ENCODE measurements at regions of chr6 and their contacts with region 1.

Region 1: DNA sequence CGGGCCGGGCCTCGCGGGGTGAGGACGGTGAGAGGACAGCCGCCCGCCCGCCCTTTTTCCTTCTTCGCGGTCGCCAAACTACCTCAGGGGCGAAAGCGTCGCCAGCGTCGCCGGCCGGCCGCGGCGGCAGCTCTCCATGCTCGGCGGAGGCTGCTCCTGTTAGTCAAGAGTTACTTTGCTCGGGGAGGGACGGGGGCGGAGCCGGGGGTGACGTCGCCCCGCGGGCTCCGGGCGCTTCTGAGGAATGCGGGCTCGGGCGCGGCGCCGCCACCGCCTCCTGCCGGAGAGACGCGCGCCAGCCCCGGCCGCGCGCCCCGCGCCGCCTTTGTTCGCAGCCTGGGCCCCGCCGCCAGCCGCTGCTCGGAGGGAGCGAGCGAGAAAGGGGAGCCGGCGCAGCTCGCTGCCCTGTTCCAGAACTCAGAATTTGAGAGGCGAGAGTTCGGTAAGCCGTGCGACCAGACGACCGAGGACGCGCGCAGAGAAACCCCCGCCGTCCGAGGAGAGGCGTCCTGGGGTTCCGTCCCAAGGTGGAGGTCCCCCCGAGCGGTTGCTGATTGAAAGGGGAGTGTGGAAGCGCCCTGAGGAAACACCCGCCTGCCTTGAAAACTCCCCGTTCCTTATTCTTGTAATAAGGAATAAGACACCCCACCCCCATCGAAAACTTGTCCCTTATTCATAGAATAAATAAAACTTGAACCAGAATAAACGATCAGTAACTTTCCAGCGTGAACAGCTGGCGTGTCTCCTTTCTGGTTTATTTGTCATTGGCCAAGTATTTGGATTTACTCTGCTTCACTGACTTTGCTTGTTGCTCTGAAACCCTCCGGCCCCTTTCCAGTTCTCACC is at the start of gene PTPRK:
- DNase-seq: peak; percentile 93 to 95
- H3K4me3 ChIP-seq: peak within 1 kb of the TSS; percentile 84
- H3K4me3 Mint-ChIP-seq: peak within 1 kb of the TSS; percentile 92
- H3K27ac Mint-ChIP-seq: peak within 1 kb of the TSS; percentile 99
- H3K4me1 ChIP-seq: peaks cover 9% of the 10 kb centered on the region
- H3K4me1 Mint-ChIP-seq: peaks cover 20% of the 10 kb centered on the region
- H3K27me3 ChIP-seq: no peaks in the 10 kb centered on the region
- H3K27me3 Mint-ChIP-seq: no peaks in the 10 kb centered on the region
- CTCF ChIP-seq: peak; percentile 12 to 46
- total RNA-seq, gene PTPRK: 94.4 and 97.3 TPM in 2 replicates

Region 2: GRCh38 chr6:127971945-127972391 is 548.7 kb before region 1 on chr6:
- CTCF ChIA-PET with region 1: no interaction called
- POLR2A ChIA-PET with region 1: no interaction called
- intact Hi-C with region 1: loop called (anchors 10 kb)
- DNase-seq: no peak
- H3K4me3 ChIP-seq: no peak overlapping the region
- H3K4me3 Mint-ChIP-seq: no peak overlapping the region
- H3K27ac Mint-ChIP-seq: no peak overlapping the region
- H3K4me1 ChIP-seq: peaks cover 12% of the 10 kb centered on the region; the same call in 1 of the 2 replicates
- H3K4me1 Mint-ChIP-seq: peaks cover 6% of the 10 kb centered on the region
- H3K27me3 ChIP-seq: no peaks in the 10 kb centered on the region
- H3K27me3 Mint-ChIP-seq: no peaks in the 10 kb centered on the region
- CTCF ChIP-seq: no peak

Region 3: GRCh38 chr6:128216917-128217316 is 303.7 kb before region 1 on chr6:
- CTCF ChIA-PET with region 1: no interaction called
- POLR2A ChIA-PET with region 1: no interaction called
- intact Hi-C with region 1: loop called (anchors 5 kb)
- DNase-seq: no peak
- H3K4me3 ChIP-seq: no peak overlapping the region
- H3K4me3 Mint-ChIP-seq: no peak overlapping the region
- H3K27ac Mint-ChIP-seq: no peak overlapping the region
- H3K4me1 ChIP-seq: peaks cover 2% of the 10 kb centered on the region
- H3K4me1 Mint-ChIP-seq: peaks cover 4% of the 10 kb centered on the region
- H3K27me3 ChIP-seq: no peaks in the 10 kb centered on the region
- H3K27me3 Mint-ChIP-seq: no peaks in the 10 kb centered on the region
- CTCF ChIP-seq: no peak

Region 4: GRCh38 chr6:128368213-128368944 is 152.3 kb before region 1 on chr6:
- CTCF ChIA-PET with region 1: no interaction called
- POLR2A ChIA-PET with region 1: no interaction called
- intact Hi-C with region 1: loop called (anchors 5 kb)
- DNase-seq: no peak
- H3K4me3 ChIP-seq: no peak overlapping the region
- H3K4me3 Mint-ChIP-seq: peak overlapping the region; percentile 35
- H3K27ac Mint-ChIP-seq: peak overlapping the region; percentile 45
- H3K4me1 ChIP-seq: peaks cover 62% of the 10 kb centered on the region
- H3K4me1 Mint-ChIP-seq: peaks cover 61% of the 10 kb centered on the region
- H3K27me3 ChIP-seq: no peaks in the 10 kb centered on the region
- H3K27me3 Mint-ChIP-seq: no peaks in the 10 kb centered on the region
- CTCF ChIP-seq: no peak

Region 5: DNA sequence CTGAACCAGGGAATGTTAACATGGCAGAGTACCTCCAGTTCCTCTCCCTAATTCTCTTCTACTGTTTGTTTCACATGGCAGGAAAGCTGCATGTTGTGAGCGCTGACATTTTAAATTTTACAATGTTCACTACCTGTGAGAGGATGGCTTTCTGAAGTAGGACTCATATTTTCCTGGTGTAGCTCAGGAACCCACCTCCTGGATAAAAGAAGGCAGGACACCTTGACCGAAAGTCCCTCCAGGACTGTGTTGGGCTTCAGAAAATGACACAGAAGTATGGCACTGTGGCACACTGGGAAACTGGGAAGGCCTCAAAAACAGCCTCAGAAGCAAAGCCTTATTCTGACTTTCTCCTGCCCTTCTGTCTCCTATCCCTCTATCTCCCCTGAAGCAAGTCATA is 33.6 kb before region 1 on chr6:
- CTCF ChIA-PET with region 1: interaction called, 5 read pairs
- POLR2A ChIA-PET with region 1: interaction called, 3 read pairs
- intact Hi-C with region 1: loop called (anchors 1 kb)
- DNase-seq: peak in 1 of 2 experiments; percentile 32
- H3K4me3 ChIP-seq: no peak overlapping the region
- H3K4me3 Mint-ChIP-seq: no peak overlapping the region
- H3K27ac Mint-ChIP-seq: peak overlapping the region; percentile 70
- H3K4me1 ChIP-seq: peaks cover 13% of the 10 kb centered on the region
- H3K4me1 Mint-ChIP-seq: peaks cover 36% of the 10 kb centered on the region
- H3K27me3 ChIP-seq: no peaks in the 10 kb centered on the region
- H3K27me3 Mint-ChIP-seq: no peaks in the 10 kb centered on the region
- CTCF ChIP-seq: peak; percentile 46 to 48

Region 6: DNA sequence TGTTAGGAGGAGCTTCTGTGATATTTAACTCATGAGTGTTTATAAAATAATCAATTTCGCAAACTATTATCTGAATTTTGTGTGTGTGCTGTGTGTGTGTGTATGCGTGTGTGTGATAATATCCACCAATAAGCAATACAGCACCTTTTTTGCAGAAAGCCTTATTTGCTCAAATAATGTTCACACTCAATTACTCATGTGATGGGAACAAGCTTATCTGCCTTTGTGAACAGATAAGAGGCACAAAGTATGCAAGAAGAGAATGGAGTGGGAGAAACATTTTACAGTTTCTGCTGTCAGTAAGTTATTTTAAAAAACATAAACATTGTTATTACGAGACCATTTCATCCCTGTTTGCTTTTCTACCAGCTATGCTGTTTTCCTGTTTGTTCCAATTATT is 36.4 kb after region 1 on chr6:
- CTCF ChIA-PET with region 1: no interaction called
- POLR2A ChIA-PET with region 1: no interaction called
- intact Hi-C with region 1: loop called (anchors 1 kb)
- DNase-seq: no peak
- H3K4me3 ChIP-seq: no peak overlapping the region
- H3K4me3 Mint-ChIP-seq: no peak overlapping the region
- H3K27ac Mint-ChIP-seq: no peak overlapping the region
- H3K4me1 ChIP-seq: peaks cover 4% of the 10 kb centered on the region; the same call in 1 of the 2 replicates
- H3K4me1 Mint-ChIP-seq: peaks cover 18% of the 10 kb centered on the region
- H3K27me3 ChIP-seq: no peaks in the 10 kb centered on the region
- H3K27me3 Mint-ChIP-seq: peaks cover 11% of the 10 kb centered on the region
- CTCF ChIP-seq: no peak

Region 7: DNA sequence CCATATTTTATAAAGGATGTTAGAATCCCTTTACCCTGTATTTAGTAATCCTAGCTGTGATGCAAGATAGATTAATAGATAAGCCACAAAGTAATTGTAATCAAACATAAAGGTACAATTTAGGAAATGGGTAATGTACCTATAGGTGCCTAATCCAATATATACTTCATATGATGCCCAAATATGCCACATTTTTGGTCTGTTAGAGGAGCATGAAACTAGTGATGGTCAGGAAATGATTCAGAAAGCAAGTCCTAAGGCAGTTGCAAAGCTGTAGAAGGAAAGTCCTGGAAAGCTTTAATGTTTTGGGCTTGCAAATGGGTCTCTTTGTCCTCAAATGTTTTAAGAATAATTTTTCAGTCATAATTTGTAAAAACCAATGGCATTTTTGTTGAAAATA is 76.3 kb after region 1 on chr6:
- CTCF ChIA-PET with region 1: no interaction called
- POLR2A ChIA-PET with region 1: no interaction called
- intact Hi-C with region 1: no loop called
- DNase-seq: no peak
- H3K4me3 ChIP-seq: no peak overlapping the region
- H3K4me3 Mint-ChIP-seq: no peak overlapping the region
- H3K27ac Mint-ChIP-seq: no peak overlapping the region
- H3K4me1 ChIP-seq: peaks cover 11% of the 10 kb centered on the region
- H3K4me1 Mint-ChIP-seq: peaks cover 15% of the 10 kb centered on the region
- H3K27me3 ChIP-seq: no peaks in the 10 kb centered on the region
- H3K27me3 Mint-ChIP-seq: peaks cover 4% of the 10 kb centered on the region
- CTCF ChIP-seq: no peak

Region 8: GRCh38 chr6:128731249-128732165 is 210.8 kb after region 1 on chr6:
- CTCF ChIA-PET with region 1: interaction called, 3 read pairs
- POLR2A ChIA-PET with region 1: no interaction called
- intact Hi-C with region 1: loop called (anchors 10 kb)
- DNase-seq: peak in 1 of 2 experiments; percentile 37
- H3K4me3 ChIP-seq: no peak overlapping the region
- H3K4me3 Mint-ChIP-seq: no peak overlapping the region
- H3K27ac Mint-ChIP-seq: no peak overlapping the region
- H3K4me1 ChIP-seq: no peaks in the 10 kb centered on the region
- H3K4me1 Mint-ChIP-seq: no peaks in the 10 kb centered on the region
- H3K27me3 ChIP-seq: no peaks in the 10 kb centered on the region
- H3K27me3 Mint-ChIP-seq: peaks cover 14% of the 10 kb centered on the region
- CTCF ChIP-seq: peak; percentile 38 to 45